PC-3 (cell line): ENCODE measurements at regions of chr4 and their contacts with region 1.

Region 1: DNA sequence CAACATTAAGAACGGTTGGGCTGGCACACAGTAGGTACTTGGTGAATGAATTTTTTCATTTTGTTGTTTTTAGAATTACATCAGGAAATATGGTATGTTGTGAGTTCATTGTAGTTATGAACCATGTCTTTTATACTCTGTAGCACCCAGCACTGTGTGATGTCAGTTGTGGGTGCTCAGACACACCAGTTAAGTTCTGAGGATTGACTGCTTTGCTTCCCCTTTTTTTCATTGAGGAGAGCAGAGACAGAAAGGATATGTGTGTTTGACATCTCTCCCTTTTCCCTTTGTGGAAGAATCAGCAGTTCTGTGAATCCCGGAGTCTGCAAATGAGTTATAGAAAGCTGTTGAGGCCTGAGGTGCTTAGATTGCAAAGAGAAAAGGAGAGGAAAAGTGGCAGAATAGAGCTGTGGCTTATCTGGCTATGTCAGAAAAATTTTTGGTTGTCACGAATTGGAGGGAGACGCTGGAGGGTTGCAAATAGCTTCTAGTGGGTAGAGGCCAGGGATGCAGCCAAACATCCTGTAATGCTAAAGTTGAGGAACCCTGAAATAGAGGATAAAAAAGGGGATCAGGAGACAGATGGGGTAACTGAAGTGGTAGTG is 13.1 kb downstream of the SMAD1 start:
- DNase-seq: no peak
- ATAC-seq: no peak
- H3K4me3 ChIP-seq: no peak overlapping the region
- H3K27ac ChIP-seq: no peak overlapping the region
- H3K4me1 ChIP-seq: peaks cover 11% of the 10 kb centered on the region
- H3K27me3 ChIP-seq: no peaks in the 10 kb centered on the region
- CTCF ChIP-seq: no peak

Region 2: GRCh38 chr4:147006229-147006628 is 1511.5 kb after region 1 on chr4:
- CTCF ChIA-PET with region 1: no interaction called
- POLR2A ChIA-PET with region 1: interaction called, 18 read pairs
- intact Hi-C with region 1: no loop called
- DNase-seq: no peak
- ATAC-seq: no peak
- H3K4me3 ChIP-seq: no peak overlapping the region
- H3K27ac ChIP-seq: no peak overlapping the region
- H3K4me1 ChIP-seq: no peaks in the 10 kb centered on the region
- H3K27me3 ChIP-seq: peaks cover 6% of the 10 kb centered on the region
- CTCF ChIP-seq: no peak